Heart left ventricle (tissue), 16 donors: ENCODE measurements at regions of chrX and their contacts with region 1.

Region 1: DNA sequence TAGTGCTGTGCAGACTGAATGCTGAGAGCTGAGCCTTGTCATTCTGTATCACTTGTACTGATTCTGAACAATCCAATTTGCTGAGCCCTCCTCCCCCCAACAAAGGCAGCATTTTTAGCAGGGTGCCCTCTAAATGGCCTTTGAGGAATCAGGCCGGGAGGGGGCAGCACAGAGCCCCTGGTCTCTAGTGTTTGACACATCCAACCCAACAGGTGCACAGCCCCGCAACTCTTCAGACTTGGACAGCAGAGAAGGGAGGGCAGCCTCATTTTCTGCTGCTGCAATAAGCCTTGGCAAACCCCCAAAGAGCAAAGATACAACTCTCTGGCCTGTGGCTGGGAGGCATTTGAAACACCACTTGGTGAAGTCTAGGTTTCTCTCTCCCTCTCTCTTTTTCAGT is 3.4 kb downstream of the ATP1B4 start:
- DNase-seq: peak; percentile 19 to 61 (median 40)
- ATAC-seq: peak; percentile 38 to 65 (median 60)
- H3K4me3 ChIP-seq: no peak overlapping the region
- H3K27ac ChIP-seq: peak overlapping the region in 2 of 12 donors; percentile 39 to 57
- H3K4me1 ChIP-seq: peaks cover 0 to 13% (median 0%) of the 10 kb centered on the region in 12 donors
- H3K27me3 ChIP-seq: peaks cover 0 to 6% (median 0%) of the 10 kb centered on the region in 9 donors
- CTCF ChIP-seq: peak; percentile 21 to 53 (median 40)
- POLR2A ChIP-seq: no peak

Region 2: DNA sequence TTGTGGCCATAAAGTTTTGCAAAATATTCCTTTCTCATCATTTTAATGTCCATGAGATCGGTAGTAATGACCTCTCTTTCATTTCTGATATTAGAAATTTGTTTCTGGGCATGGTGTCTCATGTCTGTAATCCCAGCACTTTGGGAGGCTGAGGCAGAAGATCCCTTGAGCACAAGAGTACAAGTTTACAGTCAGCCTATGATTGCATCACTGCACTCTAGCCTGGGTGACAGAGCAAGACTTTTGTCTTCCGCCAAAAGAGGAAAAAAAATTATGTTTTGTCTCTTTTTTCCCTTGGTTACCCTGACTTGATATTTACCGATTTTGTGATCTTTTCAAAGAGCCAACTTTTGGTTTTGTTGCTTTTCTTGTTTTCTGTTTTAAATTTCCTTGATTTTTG is 410.9 kb before region 1 on chrX:
- intact Hi-C with region 1: no loop called
- DNase-seq: no peak
- ATAC-seq: no peak
- H3K4me3 ChIP-seq: no peak overlapping the region
- H3K27ac ChIP-seq: no peak overlapping the region
- H3K4me1 ChIP-seq: no peaks in the 10 kb centered on the region
- H3K27me3 ChIP-seq: peaks cover 0 to 13% (median 0%) of the 10 kb centered on the region in 9 donors
- CTCF ChIP-seq: no peak
- POLR2A ChIP-seq: no peak

Region 3: GRCh38 chrX:120446498-120446897 is 81.2 kb after region 1 on chrX:
- intact Hi-C with region 1: loop called in 4 of 10 experiments (anchors 10 kb)
- DNase-seq: no peak
- ATAC-seq: peak in 3 of 4 donors; percentile 16 to 42 (median 38)
- H3K4me3 ChIP-seq: no peak overlapping the region
- H3K27ac ChIP-seq: no peak overlapping the region
- H3K4me1 ChIP-seq: peaks cover 0 to 7% (median 0%) of the 10 kb centered on the region in 12 donors
- H3K27me3 ChIP-seq: no peaks in the 10 kb centered on the region
- CTCF ChIP-seq: no peak
- POLR2A ChIP-seq: no peak

Region 4: DNA sequence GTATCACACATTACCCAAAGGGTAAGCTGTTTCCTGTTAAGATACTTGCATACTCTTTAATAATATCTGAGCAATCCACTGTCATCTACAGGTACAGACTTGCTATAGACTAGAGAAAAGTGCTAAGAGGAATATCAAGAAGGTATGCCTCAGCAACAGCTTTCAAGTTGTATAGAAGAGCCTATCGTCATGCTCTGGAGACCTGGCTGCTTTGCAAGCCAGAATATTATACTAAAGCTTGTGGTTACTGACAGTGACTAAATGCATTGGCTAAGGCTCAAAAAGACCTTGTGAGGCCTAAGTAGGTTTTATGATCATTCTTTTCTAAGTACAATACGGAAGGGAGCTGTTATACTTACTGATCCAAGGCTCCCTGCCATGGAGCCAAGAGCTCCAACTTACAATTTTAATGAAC is 92.5 kb after region 1 on chrX:
- intact Hi-C with region 1: loop called in 2 of 10 experiments (anchors 10 kb)
- DNase-seq: no peak
- ATAC-seq: no peak
- H3K4me3 ChIP-seq: no peak overlapping the region
- H3K27ac ChIP-seq: peak overlapping the region in 1 of 12 donors; percentile 28
- H3K4me1 ChIP-seq: peaks cover 0 to 38% (median 2%) of the 10 kb centered on the region in 12 donors
- H3K27me3 ChIP-seq: no peaks in the 10 kb centered on the region
- CTCF ChIP-seq: no peak
- POLR2A ChIP-seq: no peak

Region 5: DNA sequence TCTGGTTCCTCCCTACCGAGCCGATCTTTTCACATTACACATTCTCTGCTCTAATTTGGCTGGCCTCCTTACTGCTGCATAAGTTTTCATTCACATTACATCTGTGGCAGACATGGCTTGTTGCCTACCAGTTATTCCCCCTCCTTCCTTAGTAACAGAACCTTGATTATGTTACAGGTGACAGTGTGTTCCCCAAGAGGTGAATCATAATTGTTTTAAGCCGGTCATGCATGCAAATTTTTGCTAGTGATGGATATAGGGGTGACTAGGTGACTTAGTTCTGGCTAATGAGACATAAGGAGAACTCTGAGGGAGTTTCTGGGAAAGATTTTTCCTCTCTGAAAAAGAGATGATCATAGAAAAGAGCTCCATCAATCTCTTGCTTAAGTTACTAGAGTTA is 112.1 kb after region 1 on chrX:
- intact Hi-C with region 1: loop called in 1 of 10 experiments (anchors 10 kb)
- DNase-seq: no peak
- ATAC-seq: no peak
- H3K4me3 ChIP-seq: no peak overlapping the region
- H3K27ac ChIP-seq: no peak overlapping the region
- H3K4me1 ChIP-seq: no peaks in the 10 kb centered on the region
- H3K27me3 ChIP-seq: peaks cover 0 to 10% (median 0%) of the 10 kb centered on the region in 9 donors
- CTCF ChIP-seq: no peak
- POLR2A ChIP-seq: no peak